Colonic mucosa (tissue), 4 donors: ENCODE measurements at regions of chr12 and their contacts with region 1.

Region 1: GRCh38 chr12:59149997-59150642 is 229.8 kb upstream of the LRIG3 start:
- DNase-seq: peak; percentile 30
- H3K4me3 ChIP-seq: no peak overlapping the region
- H3K27ac ChIP-seq: no peak overlapping the region
- H3K4me1 ChIP-seq: no peaks in the 10 kb centered on the region
- H3K27me3 ChIP-seq: no peaks in the 10 kb centered on the region
- CTCF ChIP-seq: peak; percentile 80

Region 2: DNA sequence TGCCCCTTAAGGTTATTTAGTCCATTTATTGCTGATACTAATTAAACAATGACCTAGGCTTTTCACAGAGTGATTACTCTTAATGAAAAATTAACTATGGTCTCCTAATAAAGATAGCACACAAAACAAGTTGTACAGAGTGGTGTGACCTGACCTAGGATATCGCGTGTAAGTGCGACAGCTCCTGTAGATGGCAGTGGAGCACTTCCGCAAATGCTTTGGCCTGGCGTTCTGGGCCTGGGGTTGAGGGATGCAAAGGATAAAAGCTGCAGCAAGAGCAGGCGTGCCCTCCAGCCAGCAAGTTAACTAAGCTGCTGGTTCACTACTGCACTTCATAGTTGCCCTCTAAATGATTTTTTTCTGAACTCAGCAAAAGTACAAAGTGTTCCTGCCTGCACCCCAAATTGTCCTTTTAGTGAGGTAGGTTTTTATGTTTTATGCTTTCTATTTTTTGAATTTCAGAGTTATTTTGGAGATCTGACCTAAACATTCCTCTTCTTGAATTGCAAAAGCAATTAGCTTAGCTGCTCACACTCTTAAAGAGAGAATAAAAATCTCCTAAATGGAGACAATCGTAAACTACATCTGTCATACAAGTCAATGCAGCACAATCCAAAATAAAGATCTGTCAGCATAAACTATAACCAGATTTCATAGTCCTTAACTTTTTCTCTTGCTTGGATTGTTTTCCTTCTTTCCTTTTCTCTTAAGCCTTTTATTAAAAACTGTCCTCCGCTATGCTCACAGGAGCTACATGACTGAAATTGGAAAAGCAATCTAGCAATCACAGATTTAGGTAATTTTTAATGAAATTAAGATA is 609.4 kb before region 1 on chr12:
- intact Hi-C with region 1: loop called (anchors 10 kb)
- DNase-seq: peak; percentile 68
- H3K4me3 ChIP-seq: no peak overlapping the region
- H3K27ac ChIP-seq: no peak overlapping the region
- H3K4me1 ChIP-seq: no peaks in the 10 kb centered on the region
- H3K27me3 ChIP-seq: no peaks in the 10 kb centered on the region
- CTCF ChIP-seq: peak; percentile 60

Region 3: DNA sequence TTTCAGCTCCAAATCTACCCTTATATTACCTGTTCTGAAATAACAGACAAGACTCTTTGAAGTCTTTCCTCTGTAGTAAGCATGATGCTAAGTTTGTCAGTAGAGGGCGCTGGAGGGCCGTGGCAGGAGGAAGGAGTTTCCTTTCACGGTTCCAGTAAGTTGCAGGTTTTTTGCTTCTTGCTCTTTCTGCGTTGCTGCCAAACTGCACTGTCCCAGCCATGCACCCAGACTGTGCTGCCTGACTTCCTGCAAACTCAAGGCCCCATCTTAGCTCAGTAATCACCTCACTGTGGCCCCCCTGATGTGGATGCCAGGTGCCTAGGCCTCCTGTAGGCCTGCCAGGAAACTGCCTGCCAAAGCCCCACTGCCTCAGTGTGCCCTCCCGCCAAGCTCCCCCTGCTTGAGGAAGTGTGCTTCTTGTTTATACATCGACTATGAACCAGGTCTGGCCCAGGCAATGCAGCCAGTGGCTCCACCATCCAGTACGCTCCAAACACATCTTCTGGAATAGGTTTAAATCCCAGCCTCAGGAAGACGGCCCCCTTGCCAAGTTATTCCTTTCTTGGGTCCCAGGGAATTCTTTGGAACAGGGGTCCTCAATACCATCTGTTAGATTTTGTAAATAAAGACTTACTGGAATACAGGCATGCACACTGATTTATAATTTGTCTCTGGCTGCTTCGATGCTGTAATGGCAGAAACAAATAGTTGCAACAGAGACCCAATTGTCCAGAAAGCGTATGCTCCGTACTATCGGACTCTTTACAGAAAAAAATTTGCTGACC is 36.1 kb before region 1 on chr12:
- intact Hi-C with region 1: loop called (anchors 5 kb)
- DNase-seq: peak; percentile 88
- H3K4me3 ChIP-seq: no peak overlapping the region
- H3K27ac ChIP-seq: no peak overlapping the region
- H3K4me1 ChIP-seq: no peaks in the 10 kb centered on the region
- H3K27me3 ChIP-seq: no peaks in the 10 kb centered on the region
- CTCF ChIP-seq: peak; percentile 75

Region 4: DNA sequence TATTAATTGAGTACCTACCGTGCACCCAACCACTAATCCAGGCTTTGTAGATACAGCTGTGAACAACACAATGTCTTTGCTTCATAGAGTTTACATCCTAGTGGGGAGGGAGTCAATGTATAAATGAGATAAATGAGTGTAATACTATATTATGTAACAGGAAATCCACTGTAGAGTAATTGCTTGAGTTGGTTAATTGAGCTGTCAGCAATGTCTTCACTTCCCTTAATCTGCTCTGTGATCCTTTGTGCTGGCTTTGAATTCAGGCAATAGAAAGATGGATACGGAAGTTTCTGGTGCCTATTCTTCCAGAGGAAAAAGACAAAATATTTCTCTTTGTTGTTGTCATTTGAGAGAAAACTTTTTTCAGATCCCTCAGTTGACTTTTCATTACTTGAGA is 341.8 kb after region 1 on chr12:
- intact Hi-C with region 1: no loop called
- DNase-seq: no peak
- H3K4me3 ChIP-seq: no peak overlapping the region
- H3K27ac ChIP-seq: no peak overlapping the region
- H3K4me1 ChIP-seq: no peaks in the 10 kb centered on the region
- H3K27me3 ChIP-seq: no peaks in the 10 kb centered on the region
- CTCF ChIP-seq: no peak